ENCODE measurements at regions of chrX and their contacts with region 1.

Region 1: DNA sequence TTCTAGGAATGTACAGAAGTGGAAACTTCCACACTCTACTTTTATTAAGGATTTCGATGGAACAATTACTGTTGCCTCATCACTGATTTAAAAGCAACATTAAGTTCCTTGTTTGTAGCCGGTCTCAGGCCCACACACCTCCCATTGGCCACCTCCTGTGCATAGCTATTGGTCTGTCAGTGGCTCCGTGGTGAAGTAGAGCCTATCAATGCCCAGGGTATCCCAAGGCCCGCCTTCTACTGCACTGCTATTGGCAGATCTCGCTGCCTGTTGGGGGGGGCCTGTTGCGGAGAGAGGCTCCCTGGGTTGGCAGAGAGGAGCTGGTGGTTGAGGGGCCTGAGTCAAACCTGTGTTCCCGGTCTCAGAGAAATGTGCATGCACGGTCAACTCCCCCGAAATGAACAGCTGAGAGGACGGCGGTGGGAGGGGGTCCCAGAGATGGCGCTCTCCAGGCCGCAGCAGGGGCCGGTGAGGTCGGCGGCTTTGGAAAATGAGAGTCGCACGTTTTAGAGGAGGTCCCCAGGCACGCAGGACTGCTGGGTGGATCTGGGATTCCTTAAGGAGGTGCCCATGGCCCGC is 4.9 kb upstream of the ARAF start:
- H3K4me3 ChIP-seq: peak overlapping the region; percentile 32
- H3K27ac ChIP-seq: peak overlapping the region; percentile 45; the same call in 1 of the 2 replicates
- H3K4me1 ChIP-seq: no peaks in the 10 kb centered on the region; the same call in 1 of the 2 replicates
- CTCF ChIP-seq: no peak

Region 2: GRCh38 chrX:47540754-47541538 is 15.2 kb before region 1 on chrX:
- CTCF ChIA-PET with region 1: interaction called, 12 read pairs
- POLR2A ChIA-PET with region 1: interaction called, 5 read pairs
- H3K4me3 ChIP-seq: no peak overlapping the region
- H3K27ac ChIP-seq: no peak overlapping the region
- H3K4me1 ChIP-seq: no peaks in the 10 kb centered on the region
- CTCF ChIP-seq: peak; percentile 59

Region 3: GRCh38 chrX:47650164-47651042 is 94.3 kb after region 1 on chrX and contains the start of gene ELK1:
- CTCF ChIA-PET with region 1: no interaction called
- POLR2A ChIA-PET with region 1: interaction called, 16 read pairs
- H3K4me3 ChIP-seq: peak within 1 kb of the TSS; percentile 83
- H3K27ac ChIP-seq: peak within 1 kb of the TSS; percentile 58; the same call in 1 of the 2 replicates
- H3K4me1 ChIP-seq: peaks cover 11% of the 10 kb centered on the region
- CTCF ChIP-seq: peak; percentile 47

Measured in HEK293 (cell line).